Naive thymus-derived CD4-positive, alpha-beta T cell (primary cell): ENCODE measurements at regions of chr11 and their contacts with region 1.

Region 1: DNA sequence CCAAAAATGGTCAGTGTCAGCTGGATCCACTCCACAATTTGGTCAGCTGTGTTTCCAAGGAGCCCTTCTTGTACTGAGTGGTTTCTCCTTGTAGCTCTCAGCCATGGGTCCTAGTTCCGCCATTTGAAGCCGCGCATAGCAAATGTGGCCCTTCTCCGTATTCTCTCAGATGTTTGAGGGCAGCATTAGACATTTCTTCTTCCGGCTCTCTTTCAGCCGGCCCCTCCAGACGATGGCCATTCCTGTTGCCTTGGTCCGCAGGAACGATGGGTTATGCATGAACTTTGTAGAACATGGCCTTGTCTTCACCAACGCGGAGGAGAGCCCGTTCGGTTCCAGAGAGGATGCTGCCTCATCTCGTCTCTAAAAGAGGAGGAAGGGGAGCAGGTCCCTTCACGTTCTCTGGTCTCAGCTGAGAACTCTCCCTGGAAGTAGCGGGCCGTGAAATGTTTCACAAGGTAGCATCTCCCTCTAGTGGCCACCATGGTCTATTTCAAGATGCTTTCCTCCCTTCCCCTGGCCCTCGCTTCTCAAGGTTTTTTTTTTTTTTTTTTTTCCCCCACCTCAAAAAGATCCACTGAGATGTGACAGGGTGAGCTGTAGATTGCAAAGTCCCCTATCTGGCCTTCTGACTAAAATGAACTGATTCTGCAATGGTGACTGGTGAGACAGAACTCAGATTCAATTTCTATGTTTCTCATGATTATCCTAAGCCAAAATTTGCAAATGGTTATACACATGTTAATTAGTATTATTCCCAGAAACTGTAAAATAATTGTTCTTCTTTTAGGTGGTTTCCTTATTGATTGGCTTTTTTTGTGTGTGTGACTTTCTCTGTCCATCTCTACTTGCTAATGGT is 19.8 kb upstream of the PLET1 start:
- DNase-seq: peak; percentile 27 to 81 (median 73)
- ATAC-seq: peak; percentile 95
- H3K4me3 ChIP-seq: peak overlapping the region; percentile 78
- H3K4me3 Mint-ChIP-seq: peak overlapping the region; percentile 91 to 97 (median 94)
- H3K27ac ChIP-seq: peak overlapping the region; percentile 31
- H3K27ac Mint-ChIP-seq: peak overlapping the region; percentile 46 to 86 (median 66)
- H3K4me1 ChIP-seq: no peaks in the 10 kb centered on the region
- H3K4me1 Mint-ChIP-seq: peaks cover 7 to 36% (median 10%) of the 10 kb centered on the region in 7 donors
- H3K27me3 ChIP-seq: no peaks in the 10 kb centered on the region
- H3K27me3 Mint-ChIP-seq: no peaks in the 10 kb centered on the region

Region 2: DNA sequence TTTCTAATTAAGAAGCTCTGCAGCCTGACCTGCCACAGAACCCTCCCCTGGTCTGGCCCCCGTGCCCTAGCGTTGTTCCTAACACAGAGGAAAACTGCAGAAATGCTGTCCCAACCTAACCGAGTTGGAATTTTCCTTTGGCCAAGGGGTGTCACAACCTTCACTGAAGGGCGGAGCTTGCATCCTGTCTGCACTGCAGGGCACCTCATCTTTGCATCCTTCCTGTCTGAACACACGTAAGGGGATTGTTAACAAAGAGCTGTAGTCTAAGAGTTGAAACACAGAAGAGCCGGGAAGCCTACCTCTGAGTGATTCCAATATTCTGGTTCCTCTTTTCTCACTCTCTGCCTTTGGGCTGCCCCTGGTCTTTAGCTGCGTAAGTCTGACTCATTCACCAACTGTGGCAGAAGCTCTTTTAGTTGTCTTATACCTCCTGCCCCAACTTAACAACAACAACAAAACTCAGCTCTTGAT is 341.8 kb before region 1 on chr11:
- CTCF ChIA-PET with region 1: interaction called, 6 read pairs
- POLR2A ChIA-PET with region 1: no interaction called
- intact Hi-C with region 1: loop called in 1 of 2 experiments (anchors 5 kb)
- DNase-seq: peak in 6 of 9 donors; percentile 18 to 38 (median 27)
- ATAC-seq: peak; percentile 73
- H3K4me3 ChIP-seq: no peak overlapping the region
- H3K4me3 Mint-ChIP-seq: peak overlapping the region; percentile 59 to 95 (median 78)
- H3K27ac ChIP-seq: peak overlapping the region; percentile 49
- H3K27ac Mint-ChIP-seq: peak overlapping the region; percentile 67 to 96 (median 84)
- H3K4me1 ChIP-seq: peaks cover 4 to 29% of the 10 kb centered on the region in 2 donors
- H3K4me1 Mint-ChIP-seq: peaks cover 16 to 48% (median 32%) of the 10 kb centered on the region in 7 donors
- H3K27me3 ChIP-seq: no peaks in the 10 kb centered on the region
- H3K27me3 Mint-ChIP-seq: no peaks in the 10 kb centered on the region

Region 3: GRCh38 chr11:112062923-112063322 is 217.6 kb before region 1 on chr11:
- CTCF ChIA-PET with region 1: no interaction called
- POLR2A ChIA-PET with region 1: no interaction called
- intact Hi-C with region 1: no loop called
- DNase-seq: no peak
- ATAC-seq: no peak
- H3K4me3 ChIP-seq: no peak overlapping the region
- H3K4me3 Mint-ChIP-seq: no peak overlapping the region
- H3K27ac ChIP-seq: no peak overlapping the region
- H3K27ac Mint-ChIP-seq: no peak overlapping the region
- H3K4me1 ChIP-seq: no peaks in the 10 kb centered on the region
- H3K4me1 Mint-ChIP-seq: peaks cover 0 to 1% (median 0%) of the 10 kb centered on the region in 7 donors
- H3K27me3 ChIP-seq: no peaks in the 10 kb centered on the region
- H3K27me3 Mint-ChIP-seq: no peaks in the 10 kb centered on the region

Region 4: DNA sequence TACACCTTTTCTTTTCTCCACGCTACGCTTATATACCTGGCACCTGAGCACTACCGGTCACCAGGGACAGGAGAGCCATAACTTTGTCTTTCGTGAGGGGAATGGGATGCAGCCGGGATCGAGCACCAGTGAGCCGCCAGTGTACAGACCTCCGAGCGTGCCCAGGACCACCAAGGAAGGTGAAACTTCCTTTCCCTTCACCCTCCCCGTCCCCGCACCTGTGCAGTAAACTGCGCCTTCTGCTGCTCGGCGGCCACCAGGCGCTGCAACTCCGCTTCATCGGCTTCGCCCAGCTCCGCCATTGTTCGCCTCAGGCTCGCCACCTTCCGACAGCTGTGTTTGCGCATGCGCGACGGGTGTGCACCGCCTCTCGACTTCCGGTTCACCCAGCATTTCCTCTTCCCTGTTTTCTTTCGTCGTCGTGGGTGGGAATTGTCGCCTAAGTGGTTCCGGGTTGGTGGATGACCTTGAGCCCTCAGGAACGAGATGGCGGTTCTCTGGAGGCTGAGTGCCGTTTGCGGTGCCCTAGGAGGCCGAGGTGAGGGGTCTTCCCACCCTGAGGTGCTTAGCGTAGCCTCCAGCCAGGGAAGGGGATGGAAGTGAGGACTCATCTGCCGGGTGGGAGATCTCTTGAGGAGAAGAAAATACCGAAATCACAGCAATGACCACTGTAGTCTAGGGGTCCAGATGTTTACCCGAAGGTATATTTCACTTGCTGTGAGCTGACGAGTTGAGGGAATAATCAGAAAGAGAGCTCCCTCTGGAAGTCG is 193.9 kb before region 1 on chr11 and contains the starts of genes SDHD and TIMM8B:
- CTCF ChIA-PET with region 1: interaction called, 4 read pairs
- POLR2A ChIA-PET with region 1: no interaction called
- intact Hi-C with region 1: loop called in 1 of 2 experiments (anchors 1 kb)
- DNase-seq: peak; percentile 90 to 98 (median 97)
- ATAC-seq: peak; percentile 94
- H3K4me3 ChIP-seq: peak within 1 kb of the TSS; percentile 99
- H3K4me3 Mint-ChIP-seq: peak within 1 kb of the TSS; percentile 90 to 100 (median 98)
- H3K27ac ChIP-seq: peak within 1 kb of the TSS; percentile 76
- H3K27ac Mint-ChIP-seq: peak within 1 kb of the TSS; percentile 92 to 99 (median 96)
- H3K4me1 ChIP-seq: peaks cover 21 to 23% of the 10 kb centered on the region in 2 donors
- H3K4me1 Mint-ChIP-seq: peaks cover 44 to 69% (median 62%) of the 10 kb centered on the region in 7 donors
- H3K27me3 ChIP-seq: no peaks in the 10 kb centered on the region
- H3K27me3 Mint-ChIP-seq: peaks cover 0 to 2% (median 0%) of the 10 kb centered on the region in 5 donors
- total RNA-seq, gene SDHD: 39.6 to 84.4 (median 65.8) TPM
- total RNA-seq, gene TIMM8B: 15.5 to 61.1 (median 24.3) TPM

Region 5: GRCh38 chr11:112113539-112114457 is 166.7 kb before region 1 on chr11:
- CTCF ChIA-PET with region 1: no interaction called
- POLR2A ChIA-PET with region 1: no interaction called
- intact Hi-C with region 1: loop called (anchors 1 kb)
- DNase-seq: peak in 6 of 9 donors; percentile 17 to 46 (median 30)
- ATAC-seq: peak; percentile 76
- H3K4me3 ChIP-seq: no peak overlapping the region
- H3K4me3 Mint-ChIP-seq: peak overlapping the region in 1 of 10 donors; percentile 4
- H3K27ac ChIP-seq: no peak overlapping the region
- H3K27ac Mint-ChIP-seq: no peak overlapping the region
- H3K4me1 ChIP-seq: no peaks in the 10 kb centered on the region
- H3K4me1 Mint-ChIP-seq: peaks cover 0 to 21% (median 8%) of the 10 kb centered on the region in 7 donors
- H3K27me3 ChIP-seq: no peaks in the 10 kb centered on the region
- H3K27me3 Mint-ChIP-seq: no peaks in the 10 kb centered on the region

Region 6: DNA sequence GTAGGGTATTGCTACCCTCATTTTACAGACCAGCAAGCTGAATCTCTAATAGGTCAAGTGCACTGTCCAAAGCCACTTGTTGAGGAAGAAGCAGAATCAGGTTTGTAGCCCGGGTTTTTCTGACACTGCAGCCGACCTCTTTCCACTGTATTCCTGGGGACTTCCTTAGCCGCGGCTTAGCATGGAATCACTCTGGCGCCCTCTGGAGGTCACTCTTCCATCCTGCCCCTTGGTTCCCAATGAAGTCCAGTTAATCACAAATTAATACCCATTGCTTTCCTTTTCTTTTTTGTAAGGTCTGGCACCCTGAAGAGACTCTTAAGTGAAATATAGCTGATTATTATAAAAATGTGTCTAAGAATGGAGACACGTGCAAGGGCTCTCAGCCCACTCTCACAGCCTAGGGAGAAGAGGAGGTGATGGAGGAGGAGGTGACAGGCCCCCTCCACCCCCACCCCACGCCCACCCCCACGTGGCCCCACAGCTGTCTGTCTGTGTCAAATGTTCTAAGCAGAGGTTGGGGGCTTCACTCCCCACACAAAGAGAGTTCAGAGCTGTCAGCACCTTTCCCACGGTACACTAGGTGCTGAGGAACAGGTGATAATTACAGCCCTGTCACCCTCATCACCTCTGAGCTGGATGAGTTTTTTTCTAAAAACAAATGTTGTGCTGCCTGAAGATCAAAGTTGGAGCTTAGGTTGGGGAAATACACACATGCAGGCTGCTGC is 1252.4 kb after region 1 on chr11:
- CTCF ChIA-PET with region 1: no interaction called
- POLR2A ChIA-PET with region 1: no interaction called
- intact Hi-C with region 1: loop called in 1 of 2 experiments (anchors 5 kb)
- DNase-seq: peak in 8 of 9 donors; percentile 18 to 56 (median 34)
- ATAC-seq: peak; percentile 72
- H3K4me3 ChIP-seq: no peak overlapping the region
- H3K4me3 Mint-ChIP-seq: no peak overlapping the region
- H3K27ac ChIP-seq: no peak overlapping the region
- H3K27ac Mint-ChIP-seq: no peak overlapping the region
- H3K4me1 ChIP-seq: no peaks in the 10 kb centered on the region
- H3K4me1 Mint-ChIP-seq: no peaks in the 10 kb centered on the region
- H3K27me3 ChIP-seq: no peaks in the 10 kb centered on the region
- H3K27me3 Mint-ChIP-seq: peaks cover 18 to 42% (median 29%) of the 10 kb centered on the region in 5 donors